ENCODE measurements at regions of chr2 and their contacts with region 1.

Region 1: DNA sequence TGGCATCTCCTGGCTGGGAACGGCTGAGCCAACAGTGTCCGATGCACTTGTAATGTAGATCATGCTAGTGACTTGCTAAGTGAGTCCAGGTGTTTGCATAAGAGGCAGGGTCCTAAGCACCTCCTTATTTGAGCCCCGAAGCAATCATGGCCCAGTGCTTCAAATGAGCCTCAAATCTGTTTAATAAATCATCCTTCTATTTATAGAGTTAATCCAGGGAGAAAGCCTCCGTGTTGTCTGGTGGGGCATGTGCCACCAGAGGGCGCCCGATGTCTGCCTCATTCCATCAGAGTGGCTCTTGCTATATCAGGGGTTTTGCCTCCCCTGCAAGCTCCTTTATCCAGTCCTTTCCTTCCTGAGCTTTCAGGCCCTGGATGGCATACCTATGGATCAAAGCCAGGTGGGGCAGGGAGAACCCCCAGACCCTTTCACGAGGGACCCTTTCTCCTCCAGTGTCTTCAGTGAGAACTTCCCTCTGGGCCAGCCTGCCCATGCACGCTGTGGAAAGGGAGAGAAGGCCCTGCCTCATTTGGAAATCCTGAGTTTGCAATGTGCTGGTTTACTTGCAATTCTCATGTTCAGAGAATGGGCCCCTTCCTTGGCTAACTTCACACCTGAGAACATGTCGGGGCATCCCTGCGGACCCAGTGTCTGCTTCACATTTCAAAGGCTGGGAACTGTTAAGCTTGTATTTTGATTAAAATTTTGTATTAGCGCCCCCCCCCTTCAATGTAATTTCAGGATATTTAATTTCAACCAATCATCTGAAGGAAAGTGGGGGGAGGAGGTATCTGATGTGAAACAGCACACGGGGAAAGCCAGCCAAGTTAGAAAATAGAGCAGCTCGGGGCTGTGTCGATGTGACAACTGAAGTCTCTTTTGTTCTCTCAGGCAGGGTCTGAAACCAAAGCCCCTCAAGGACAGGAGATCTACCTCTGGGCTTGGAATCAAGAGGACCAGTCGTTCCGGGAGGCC is 39.7 kb downstream of the RDH14 start:
- DNase-seq: peak; percentile 78
- H3K4me3 ChIP-seq: no peak overlapping the region
- H3K27ac ChIP-seq: no peak overlapping the region
- H3K4me1 ChIP-seq: no peaks in the 10 kb centered on the region
- H3K27me3 ChIP-seq: no peaks in the 10 kb centered on the region
- CTCF ChIP-seq: peak; percentile 84 to 89
- POLR2A ChIP-seq: no peak

Region 2: DNA sequence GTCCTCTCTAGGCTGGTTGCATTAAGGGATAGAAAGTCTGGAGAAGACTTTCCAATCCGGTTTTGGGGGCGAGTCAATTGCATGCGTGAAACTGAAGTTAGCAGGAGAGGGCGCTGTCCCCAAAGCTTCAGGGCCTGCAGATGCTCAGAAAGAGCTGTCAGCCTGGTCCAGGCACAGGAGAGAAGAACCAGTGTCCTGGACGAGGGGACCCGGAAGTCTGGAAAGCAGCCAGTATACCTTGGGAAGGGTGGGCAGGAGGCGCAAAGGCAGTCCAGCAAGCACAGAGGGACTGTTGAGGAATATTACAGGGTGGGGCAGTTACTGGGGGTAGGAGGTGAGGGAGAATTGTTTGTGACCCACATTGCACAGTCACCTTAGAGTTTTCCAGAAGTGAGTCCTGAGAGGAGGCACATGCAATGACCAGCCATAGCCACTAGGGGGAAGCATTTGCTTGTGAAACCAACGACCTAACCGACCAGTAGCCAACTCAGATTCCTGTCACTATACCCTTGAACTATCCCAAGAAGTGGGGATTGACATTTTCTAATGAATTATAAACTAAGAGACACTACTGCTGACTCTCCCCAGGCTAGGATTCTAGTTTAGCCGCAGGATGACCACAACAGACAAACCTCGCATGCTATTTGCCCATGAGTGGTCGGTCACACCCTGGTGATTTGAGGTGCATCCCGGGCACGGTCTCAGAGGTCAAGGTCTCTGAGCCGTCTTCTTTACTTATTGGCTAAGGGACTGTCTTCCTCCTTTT is 133.1 kb before region 1 on chr2:
- CTCF ChIA-PET with region 1: interaction called, 11 read pairs
- POLR2A ChIA-PET with region 1: interaction called, 4 read pairs
- dilution Hi-C with region 1: no loop called
- intact Hi-C with region 1: loop called (anchors 1 kb)
- DNase-seq: peak; percentile 74
- H3K4me3 ChIP-seq: no peak overlapping the region
- H3K27ac ChIP-seq: no peak overlapping the region
- H3K4me1 ChIP-seq: peaks cover 12% of the 10 kb centered on the region
- H3K27me3 ChIP-seq: no peaks in the 10 kb centered on the region
- CTCF ChIP-seq: peak; percentile 85 to 92
- POLR2A ChIP-seq: no peak

Region 3: DNA sequence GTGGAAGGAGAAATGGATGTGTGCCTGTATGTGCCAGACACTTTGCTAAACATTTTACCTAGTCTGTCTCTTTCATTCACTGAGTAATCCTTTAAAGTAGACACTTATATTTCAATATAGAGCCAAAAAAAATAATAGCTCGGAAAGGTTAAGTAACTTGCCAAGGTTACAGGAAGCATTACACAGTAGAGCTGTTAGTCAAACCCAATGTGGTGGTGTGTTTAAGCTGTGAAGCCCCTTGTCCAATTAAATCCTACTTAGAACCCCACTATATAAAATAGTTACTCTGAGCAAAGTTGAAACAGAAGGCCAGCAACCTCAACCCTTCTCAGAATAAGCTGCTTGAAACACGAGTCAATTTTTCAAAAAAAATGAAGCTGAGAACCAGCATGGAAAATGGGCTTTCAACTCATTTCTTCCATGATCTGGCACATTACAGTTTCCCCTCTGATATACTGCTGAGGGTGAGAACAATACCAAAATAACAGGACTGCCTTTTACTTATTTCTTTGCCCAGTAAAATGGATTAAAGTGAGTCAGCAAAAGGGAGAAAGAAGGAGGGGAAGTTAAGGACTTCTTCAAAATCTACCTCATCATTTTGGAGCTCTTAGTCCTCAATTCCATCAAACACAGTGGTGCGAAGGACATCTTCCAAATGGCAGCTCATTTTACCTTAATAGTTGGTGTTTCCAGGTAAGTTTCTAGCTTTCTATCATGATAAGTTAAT is 31.8 kb after region 1 on chr2:
- CTCF ChIA-PET with region 1: interaction called, 13 read pairs
- POLR2A ChIA-PET with region 1: no interaction called
- dilution Hi-C with region 1: no loop called
- intact Hi-C with region 1: no loop called
- DNase-seq: peak; percentile 62
- H3K4me3 ChIP-seq: no peak overlapping the region
- H3K27ac ChIP-seq: peak overlapping the region; percentile 50
- H3K4me1 ChIP-seq: peaks cover 18% of the 10 kb centered on the region
- H3K27me3 ChIP-seq: no peaks in the 10 kb centered on the region
- CTCF ChIP-seq: no peak
- POLR2A ChIP-seq: no peak

Region 4: GRCh38 chr2:18749912-18750526 is 229.3 kb after region 1 on chr2:
- CTCF ChIA-PET with region 1: interaction called, 23 read pairs
- POLR2A ChIA-PET with region 1: no interaction called
- dilution Hi-C with region 1: no loop called
- intact Hi-C with region 1: loop called (anchors 1 kb)
- DNase-seq: peak; percentile 42
- H3K4me3 ChIP-seq: no peak overlapping the region
- H3K27ac ChIP-seq: no peak overlapping the region
- H3K4me1 ChIP-seq: no peaks in the 10 kb centered on the region
- H3K27me3 ChIP-seq: no peaks in the 10 kb centered on the region
- CTCF ChIP-seq: peak; percentile 44 to 52
- POLR2A ChIP-seq: no peak

Region 5: GRCh38 chr2:19051203-19051831 is 530.6 kb after region 1 on chr2:
- CTCF ChIA-PET with region 1: no interaction called
- POLR2A ChIA-PET with region 1: no interaction called
- dilution Hi-C with region 1: no loop called
- intact Hi-C with region 1: loop called (anchors 1 kb)
- DNase-seq: no peak
- H3K4me3 ChIP-seq: no peak overlapping the region
- H3K27ac ChIP-seq: no peak overlapping the region
- H3K4me1 ChIP-seq: no peaks in the 10 kb centered on the region
- H3K27me3 ChIP-seq: no peaks in the 10 kb centered on the region
- CTCF ChIP-seq: no peak
- POLR2A ChIP-seq: no peak

Region 6: GRCh38 chr2:19746611-19747309 is 1226.0 kb after region 1 on chr2:
- CTCF ChIA-PET with region 1: interaction called, 7 read pairs
- POLR2A ChIA-PET with region 1: no interaction called
- dilution Hi-C with region 1: no loop called
- intact Hi-C with region 1: loop called (anchors 2 kb)
- DNase-seq: peak; percentile 29
- H3K4me3 ChIP-seq: no peak overlapping the region
- H3K27ac ChIP-seq: no peak overlapping the region
- H3K4me1 ChIP-seq: no peaks in the 10 kb centered on the region
- H3K27me3 ChIP-seq: no peaks in the 10 kb centered on the region
- CTCF ChIP-seq: peak; percentile 15 to 54
- POLR2A ChIP-seq: no peak

Measured in endothelial cell of umbilical vein (primary cell).